A673 (cell line): ENCODE measurements at regions of chr1 and their contacts with region 1.

Region 1: DNA sequence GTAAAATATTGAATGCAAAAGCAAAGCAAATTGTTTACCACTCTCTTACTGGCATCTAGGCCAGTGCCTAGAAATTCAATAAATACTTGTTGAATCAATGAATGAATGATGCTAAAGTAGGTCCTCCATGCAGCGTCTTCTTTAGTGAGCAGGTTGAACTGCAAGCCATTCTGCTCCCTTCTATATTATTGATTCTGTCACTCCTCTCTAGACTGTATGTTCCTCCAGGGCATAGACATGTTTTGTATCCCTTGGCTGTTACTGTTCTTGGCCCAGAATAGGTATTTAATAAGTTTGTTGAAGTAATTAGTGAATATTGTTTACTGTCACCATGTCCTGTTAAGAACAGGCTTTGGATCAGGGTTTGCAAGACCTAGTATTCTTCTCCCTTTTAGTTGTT is 43.7 kb downstream of the OSBPL9 start:
- DNase-seq: no peak
- H3K4me3 ChIP-seq: peak overlapping the region; percentile 10
- H3K27ac ChIP-seq: peak overlapping the region; percentile 43
- H3K4me1 ChIP-seq: peaks cover 30% of the 10 kb centered on the region
- H3K27me3 ChIP-seq: no peaks in the 10 kb centered on the region
- CTCF ChIP-seq: no peak

Region 2: DNA sequence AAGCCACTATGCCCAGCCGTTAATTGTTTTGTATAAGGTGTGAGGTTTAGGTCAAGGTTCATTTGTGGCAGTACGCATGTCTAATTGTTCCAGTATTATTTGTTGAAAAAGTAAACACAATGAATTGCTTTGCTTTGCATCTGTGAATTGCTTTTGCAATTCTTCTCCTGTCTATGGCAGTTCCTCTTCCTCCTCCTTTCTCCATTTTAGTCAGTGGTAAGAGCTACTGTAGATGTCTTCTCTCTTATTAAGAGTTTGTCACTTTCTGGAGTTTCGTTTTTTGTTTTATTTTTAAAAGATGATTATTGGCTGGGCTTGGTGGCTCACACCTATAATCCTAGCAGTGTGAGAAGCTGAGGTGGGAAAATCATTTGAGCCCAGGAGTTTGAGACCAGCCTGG is 529.4 kb before region 1 on chr1:
- CTCF ChIA-PET with region 1: no interaction called
- POLR2A ChIA-PET with region 1: no interaction called
- intact Hi-C with region 1: no loop called
- DNase-seq: no peak
- H3K4me3 ChIP-seq: no peak overlapping the region
- H3K27ac ChIP-seq: no peak overlapping the region
- H3K4me1 ChIP-seq: no peaks in the 10 kb centered on the region
- H3K27me3 ChIP-seq: peaks cover 8% of the 10 kb centered on the region
- CTCF ChIP-seq: no peak

Region 3: GRCh38 chr1:51472359-51472758 is 188.2 kb before region 1 on chr1:
- CTCF ChIA-PET with region 1: no interaction called
- POLR2A ChIA-PET with region 1: no interaction called
- intact Hi-C with region 1: no loop called
- DNase-seq: no peak
- H3K4me3 ChIP-seq: no peak overlapping the region
- H3K27ac ChIP-seq: no peak overlapping the region
- H3K4me1 ChIP-seq: peaks cover 24% of the 10 kb centered on the region
- H3K27me3 ChIP-seq: no peaks in the 10 kb centered on the region
- CTCF ChIP-seq: no peak

Region 4: GRCh38 chr1:51616901-51617708 is 43.5 kb before region 1 on chr1 and contains the start of gene OSBPL9:
- CTCF ChIA-PET with region 1: no interaction called
- POLR2A ChIA-PET with region 1: interaction called, 15 read pairs
- intact Hi-C with region 1: no loop called
- DNase-seq: peak; percentile 95
- H3K4me3 ChIP-seq: peak within 1 kb of the TSS; percentile 85
- H3K27ac ChIP-seq: peak within 1 kb of the TSS; percentile 91
- H3K4me1 ChIP-seq: peaks cover 27% of the 10 kb centered on the region
- H3K27me3 ChIP-seq: no peaks in the 10 kb centered on the region
- CTCF ChIP-seq: no peak
- total RNA-seq, gene OSBPL9: 62.4 and 73.7 TPM in 2 replicates